CD4-positive, alpha-beta T cell (primary cell): ENCODE measurements at regions of chrX and their contacts with region 1.

Region 1: DNA sequence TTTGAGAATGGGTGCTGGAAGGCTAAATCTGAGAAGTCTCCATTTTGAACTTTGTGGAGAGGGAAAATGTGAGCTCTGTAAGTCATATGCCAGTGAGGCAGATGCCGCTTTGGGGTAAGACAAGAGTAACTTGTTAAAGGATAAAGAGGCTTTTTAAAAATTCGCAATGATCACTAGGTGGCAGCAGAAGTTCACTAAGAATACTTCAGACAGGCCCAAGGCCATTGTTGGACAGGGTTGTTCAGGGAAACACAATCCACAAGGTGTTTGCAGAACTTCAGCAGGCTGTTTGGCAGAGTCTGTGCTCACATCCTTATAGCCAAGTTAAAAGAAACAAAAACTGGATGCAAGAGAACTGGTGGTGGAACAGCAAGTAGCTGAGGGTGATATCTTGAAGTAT is 13.7 kb upstream of the PIGA start:
- DNase-seq: peak in 4 of 14 experiments; percentile 9 to 60 (median 38)
- ATAC-seq: no peak
- H3K4me3 ChIP-seq: no peak overlapping the region
- H3K4me3 Mint-ChIP-seq: no peak overlapping the region
- H3K27ac ChIP-seq: no peak overlapping the region
- H3K27ac Mint-ChIP-seq: no peak overlapping the region
- H3K4me1 ChIP-seq: no peaks in the 10 kb centered on the region
- H3K4me1 Mint-ChIP-seq: no peaks in the 10 kb centered on the region
- H3K27me3 ChIP-seq: peaks cover 0 to 4% of the 10 kb centered on the region in 2 experiments
- H3K27me3 Mint-ChIP-seq: peaks cover 5% of the 10 kb centered on the region
- CTCF ChIP-seq: peak; percentile 56

Region 2: GRCh38 chrX:15366506-15367352 is 17.7 kb after region 1 on chrX:
- CTCF ChIA-PET with region 1: no interaction called
- POLR2A ChIA-PET with region 1: no interaction called
- intact Hi-C with region 1: no loop called
- DNase-seq: peak in 2 of 14 experiments; percentile 8 to 15
- ATAC-seq: no peak
- H3K4me3 ChIP-seq: no peak overlapping the region
- H3K4me3 Mint-ChIP-seq: no peak overlapping the region
- H3K27ac ChIP-seq: no peak overlapping the region
- H3K27ac Mint-ChIP-seq: no peak overlapping the region
- H3K4me1 ChIP-seq: no peaks in the 10 kb centered on the region
- H3K4me1 Mint-ChIP-seq: no peaks in the 10 kb centered on the region
- H3K27me3 ChIP-seq: peaks cover 2 to 6% of the 10 kb centered on the region in 2 experiments
- H3K27me3 Mint-ChIP-seq: peaks cover 3% of the 10 kb centered on the region
- CTCF ChIP-seq: no peak

Region 3: DNA sequence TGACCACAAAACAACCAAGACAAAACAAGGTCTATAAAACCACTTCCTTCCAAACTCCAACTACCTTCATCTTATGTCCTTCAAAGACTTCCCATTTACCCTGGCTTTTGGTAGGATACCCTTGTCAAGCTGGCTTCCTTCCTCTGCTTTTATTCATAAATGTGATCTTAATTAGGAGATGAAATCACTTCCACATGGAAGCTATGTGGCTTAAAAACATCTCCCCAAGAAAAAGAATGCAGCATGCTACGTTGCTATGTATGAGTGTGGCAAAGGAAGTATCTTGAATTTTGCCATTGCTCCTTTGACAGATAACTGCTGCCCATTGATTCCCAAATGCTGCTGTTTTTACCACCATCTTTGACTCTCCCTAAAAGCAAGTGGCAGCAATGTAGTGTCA is 81.5 kb after region 1 on chrX:
- CTCF ChIA-PET with region 1: no interaction called
- POLR2A ChIA-PET with region 1: no interaction called
- intact Hi-C with region 1: no loop called
- DNase-seq: no peak
- ATAC-seq: no peak
- H3K4me3 ChIP-seq: no peak overlapping the region
- H3K4me3 Mint-ChIP-seq: no peak overlapping the region
- H3K27ac ChIP-seq: no peak overlapping the region
- H3K27ac Mint-ChIP-seq: no peak overlapping the region
- H3K4me1 ChIP-seq: no peaks in the 10 kb centered on the region
- H3K4me1 Mint-ChIP-seq: no peaks in the 10 kb centered on the region
- H3K27me3 ChIP-seq: no peaks in the 10 kb centered on the region
- H3K27me3 Mint-ChIP-seq: peaks cover 27% of the 10 kb centered on the region
- CTCF ChIP-seq: no peak

Region 4: DNA sequence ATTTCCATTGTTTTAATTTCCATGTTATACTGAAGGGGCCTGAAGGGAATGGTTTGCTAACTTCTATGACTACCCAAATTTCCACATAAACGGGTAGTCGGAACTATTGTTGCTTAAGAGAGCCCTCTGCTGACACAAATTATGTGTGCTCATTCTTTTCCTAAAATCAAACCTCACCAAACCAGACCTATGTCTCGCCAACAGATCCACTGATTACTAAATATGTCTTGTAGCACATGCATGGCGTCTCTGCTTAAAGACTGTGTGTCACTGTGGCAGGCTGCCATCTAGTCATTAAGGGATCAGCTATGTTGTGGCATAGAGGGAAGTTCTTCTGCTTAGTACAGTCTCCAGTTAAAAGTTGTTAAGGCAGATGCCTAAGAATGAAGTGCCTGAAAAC is 119.0 kb after region 1 on chrX:
- CTCF ChIA-PET with region 1: no interaction called
- POLR2A ChIA-PET with region 1: no interaction called
- intact Hi-C with region 1: loop called in 1 of 2 experiments (anchors 2 kb)
- DNase-seq: peak in 3 of 14 experiments; percentile 1 to 21 (median 14)
- ATAC-seq: no peak
- H3K4me3 ChIP-seq: no peak overlapping the region
- H3K4me3 Mint-ChIP-seq: no peak overlapping the region
- H3K27ac ChIP-seq: no peak overlapping the region
- H3K27ac Mint-ChIP-seq: no peak overlapping the region
- H3K4me1 ChIP-seq: no peaks in the 10 kb centered on the region
- H3K4me1 Mint-ChIP-seq: no peaks in the 10 kb centered on the region
- H3K27me3 ChIP-seq: no peaks in the 10 kb centered on the region
- H3K27me3 Mint-ChIP-seq: no peaks in the 10 kb centered on the region
- CTCF ChIP-seq: peak; percentile 9

Region 5: GRCh38 chrX:16695079-16695676 is 1346.1 kb after region 1 on chrX:
- CTCF ChIA-PET with region 1: no interaction called
- POLR2A ChIA-PET with region 1: no interaction called
- intact Hi-C with region 1: loop called in 1 of 2 experiments (anchors 10 kb)
- DNase-seq: peak; percentile 19 to 78 (median 55)
- ATAC-seq: peak; percentile 74
- H3K4me3 ChIP-seq: no peak overlapping the region
- H3K4me3 Mint-ChIP-seq: no peak overlapping the region
- H3K27ac ChIP-seq: no peak overlapping the region
- H3K27ac Mint-ChIP-seq: no peak overlapping the region
- H3K4me1 ChIP-seq: no peaks in the 10 kb centered on the region
- H3K4me1 Mint-ChIP-seq: no peaks in the 10 kb centered on the region
- H3K27me3 ChIP-seq: no peaks in the 10 kb centered on the region
- H3K27me3 Mint-ChIP-seq: no peaks in the 10 kb centered on the region
- CTCF ChIP-seq: peak; percentile 71